ENCODE measurements at regions of chr10 and their contacts with region 1.

Region 1: GRCh38 chr10:34732926-34733325 is 82.2 kb downstream of the PARD3 start:
- DNase-seq: peak; percentile 44 to 66
- ATAC-seq: peak; percentile 63 to 82; a peak in 5 of 6 replicates
- H3K4me3 ChIP-seq: no peak overlapping the region
- H3K27ac ChIP-seq: peak overlapping the region; percentile 51 to 85; a peak in 5 of 6 replicates
- H3K4me1 ChIP-seq: peaks cover 77% of the 10 kb centered on the region
- CTCF ChIP-seq: peak; percentile 50
- EP300 ChIP-seq: no peak
- POLR2A ChIP-seq: no peak
- RAD21 ChIP-seq: peak; percentile 50 to 56; a peak in 4 of 5 replicates

Region 2: GRCh38 chr10:34607894-34608293 is 125.0 kb before region 1 on chr10:
- CTCF ChIA-PET with region 1: no interaction called
- POLR2A ChIA-PET with region 1: no interaction called
- DNase-seq: no peak
- ATAC-seq: peak in 1 of 2 experiments; percentile 58; a peak in 3 of 6 replicates
- H3K4me3 ChIP-seq: no peak overlapping the region
- H3K27ac ChIP-seq: no peak overlapping the region
- H3K4me1 ChIP-seq: peaks cover 28% of the 10 kb centered on the region
- CTCF ChIP-seq: no peak
- EP300 ChIP-seq: no peak
- POLR2A ChIP-seq: no peak
- RAD21 ChIP-seq: no peak

Region 3: GRCh38 chr10:34713875-34714274 is 19.1 kb before region 1 on chr10:
- CTCF ChIA-PET with region 1: interaction called, 15 read pairs
- POLR2A ChIA-PET with region 1: interaction called, 3 read pairs
- DNase-seq: peak; percentile 40 to 60
- ATAC-seq: peak; percentile 75 to 78
- H3K4me3 ChIP-seq: no peak overlapping the region
- H3K27ac ChIP-seq: peak overlapping the region; percentile 79 to 86
- H3K4me1 ChIP-seq: peaks cover 82% of the 10 kb centered on the region
- CTCF ChIP-seq: no peak
- EP300 ChIP-seq: no peak
- POLR2A ChIP-seq: no peak
- RAD21 ChIP-seq: no peak

Region 4: GRCh38 chr10:34753014-34753757 is 20.3 kb after region 1 on chr10:
- CTCF ChIA-PET with region 1: interaction called, 10 read pairs
- POLR2A ChIA-PET with region 1: no interaction called
- DNase-seq: no peak
- ATAC-seq: peak; percentile 54 to 56; a peak in 4 of 6 replicates
- H3K4me3 ChIP-seq: no peak overlapping the region
- H3K27ac ChIP-seq: peak overlapping the region in 1 of 2 experiments; percentile 62; a peak in 3 of 6 replicates
- H3K4me1 ChIP-seq: peaks cover 52% of the 10 kb centered on the region
- CTCF ChIP-seq: no peak
- EP300 ChIP-seq: no peak
- POLR2A ChIP-seq: no peak
- RAD21 ChIP-seq: no peak

Measured in A549 (cell line).